ENCODE measurements at regions of chr2 and their contacts with region 1.

Region 1: GRCh38 chr2:9234680-9235387 is 28.2 kb downstream of the ASAP2 start:
- DNase-seq: peak; percentile 90 to 99
- H3K4me3 ChIP-seq: peak overlapping the region; percentile 59
- H3K27ac ChIP-seq: peak overlapping the region; percentile 98
- H3K4me1 ChIP-seq: peaks cover 93% of the 10 kb centered on the region
- H3K27me3 ChIP-seq: no peaks in the 10 kb centered on the region
- CTCF ChIP-seq: no peak

Region 2: GRCh38 chr2:9178904-9179571 is 55.8 kb before region 1 on chr2:
- CTCF ChIA-PET with region 1: no interaction called
- POLR2A ChIA-PET with region 1: no interaction called
- intact Hi-C with region 1: loop called (anchors 1 kb)
- DNase-seq: peak; percentile 54 to 89
- H3K4me3 ChIP-seq: peak overlapping the region; percentile 18; the same call in 1 of the 2 replicates
- H3K27ac ChIP-seq: peak overlapping the region; percentile 90
- H3K4me1 ChIP-seq: peaks cover 69% of the 10 kb centered on the region
- H3K27me3 ChIP-seq: no peaks in the 10 kb centered on the region
- CTCF ChIP-seq: no peak

Region 3: DNA sequence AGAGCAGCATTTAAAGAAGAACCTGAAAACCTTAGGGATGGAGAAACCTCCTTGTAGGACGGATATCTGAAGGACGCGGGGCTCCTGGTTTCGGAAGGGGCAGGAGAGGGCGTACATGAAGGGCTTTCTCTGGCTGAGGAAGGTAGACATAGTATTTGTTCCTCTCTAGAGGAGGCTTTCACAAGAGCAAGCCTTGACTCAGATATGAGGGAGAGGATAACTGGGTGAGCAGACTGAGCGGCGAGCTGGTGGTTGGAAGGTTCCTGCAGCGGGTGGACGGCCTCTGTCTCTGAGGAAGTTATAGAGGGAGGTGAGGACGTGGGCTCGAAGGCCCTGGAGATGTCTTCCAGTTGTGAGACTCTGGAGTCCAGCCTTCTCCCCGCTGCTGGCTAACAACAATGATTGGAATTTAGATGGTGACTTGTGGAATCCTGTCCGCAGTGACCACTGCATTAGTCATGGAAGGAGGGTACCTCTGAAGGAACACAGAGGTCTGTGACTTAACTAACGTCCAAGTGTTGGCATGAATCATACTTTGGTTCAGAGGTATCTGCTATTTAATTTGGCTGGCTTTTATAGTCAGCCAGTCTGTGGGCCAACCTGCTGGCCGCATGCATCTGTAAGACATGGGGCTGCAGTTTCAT is 52.7 kb after region 1 on chr2:
- CTCF ChIA-PET with region 1: no interaction called
- POLR2A ChIA-PET with region 1: interaction called, 10 read pairs
- intact Hi-C with region 1: loop called (anchors 1 kb)
- DNase-seq: peak; percentile 83 to 100
- H3K4me3 ChIP-seq: peak overlapping the region; percentile 33; the same call in 1 of the 2 replicates
- H3K27ac ChIP-seq: peak overlapping the region; percentile 96
- H3K4me1 ChIP-seq: peaks cover 59% of the 10 kb centered on the region
- H3K27me3 ChIP-seq: no peaks in the 10 kb centered on the region
- CTCF ChIP-seq: no peak

Region 4: GRCh38 chr2:9380702-9381628 is 146.1 kb after region 1 on chr2:
- CTCF ChIA-PET with region 1: no interaction called
- POLR2A ChIA-PET with region 1: no interaction called
- intact Hi-C with region 1: loop called (anchors 1 kb)
- DNase-seq: peak; percentile 68 to 94
- H3K4me3 ChIP-seq: peak overlapping the region; percentile 12; the same call in 1 of the 2 replicates
- H3K27ac ChIP-seq: peak overlapping the region; percentile 93
- H3K4me1 ChIP-seq: peaks cover 77% of the 10 kb centered on the region
- H3K27me3 ChIP-seq: no peaks in the 10 kb centered on the region
- CTCF ChIP-seq: no peak

Region 5: DNA sequence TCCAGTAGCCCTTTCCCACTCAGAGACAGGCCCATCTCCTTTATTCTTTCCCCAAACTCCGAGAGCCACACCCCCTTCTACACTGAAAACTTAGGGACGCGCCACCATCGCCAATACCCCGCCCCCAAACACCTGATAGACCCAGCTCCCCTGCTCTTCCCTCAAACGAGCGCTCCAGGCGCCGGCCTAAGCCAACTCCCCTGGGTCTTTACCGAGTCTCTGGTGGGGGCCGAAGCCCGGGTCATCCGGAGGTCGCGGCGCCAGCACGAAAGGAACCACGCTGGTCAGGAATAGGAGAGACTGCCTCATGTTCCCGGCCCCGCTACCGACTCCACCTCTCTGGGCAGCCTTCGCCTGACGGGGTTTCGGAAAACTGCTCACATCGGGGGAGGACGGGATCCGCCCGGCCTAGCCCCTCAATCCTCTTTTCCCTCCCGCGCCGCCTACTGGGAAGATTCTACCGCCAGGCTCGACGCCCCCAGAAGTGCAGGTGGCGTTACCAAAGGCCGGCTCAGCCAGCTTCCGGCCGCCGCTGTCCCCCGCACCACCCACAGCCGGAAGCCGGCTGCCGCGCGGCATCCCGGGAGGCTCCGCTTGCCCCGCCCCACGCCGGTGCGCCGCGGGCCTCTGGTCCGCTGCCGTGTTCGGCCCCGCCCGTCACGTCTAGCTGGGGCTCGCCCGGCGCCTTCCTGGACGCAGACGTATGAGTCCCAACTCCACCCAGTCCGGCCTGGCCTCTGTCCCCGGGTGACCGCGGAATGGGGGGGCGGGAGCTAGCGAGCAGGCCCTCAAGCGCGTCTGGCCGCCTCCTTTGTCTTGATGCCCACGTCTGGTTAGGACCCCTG is 320.7 kb after region 1 on chr2 and contains the start of gene ADAM17:
- CTCF ChIA-PET with region 1: no interaction called
- POLR2A ChIA-PET with region 1: no interaction called
- intact Hi-C with region 1: loop called (anchors 10 kb)
- DNase-seq: peak; percentile 90 to 96
- H3K4me3 ChIP-seq: peak within 1 kb of the TSS; percentile 83
- H3K27ac ChIP-seq: peak within 1 kb of the TSS; percentile 96
- H3K4me1 ChIP-seq: peaks cover 74% of the 10 kb centered on the region
- H3K27me3 ChIP-seq: no peaks in the 10 kb centered on the region
- CTCF ChIP-seq: peak; percentile 35; the same call in 1 of the 2 replicates
- total RNA-seq, gene ADAM17: 53.5 and 65.0 TPM in 2 replicates

Region 6: GRCh38 chr2:9796056-9797010 is 561.5 kb after region 1 on chr2:
- CTCF ChIA-PET with region 1: no interaction called
- POLR2A ChIA-PET with region 1: no interaction called
- intact Hi-C with region 1: no loop called
- DNase-seq: no peak
- H3K4me3 ChIP-seq: no peak overlapping the region
- H3K27ac ChIP-seq: peak overlapping the region; percentile 95
- H3K4me1 ChIP-seq: peaks cover 53% of the 10 kb centered on the region
- H3K27me3 ChIP-seq: no peaks in the 10 kb centered on the region
- CTCF ChIP-seq: no peak

Region 7: DNA sequence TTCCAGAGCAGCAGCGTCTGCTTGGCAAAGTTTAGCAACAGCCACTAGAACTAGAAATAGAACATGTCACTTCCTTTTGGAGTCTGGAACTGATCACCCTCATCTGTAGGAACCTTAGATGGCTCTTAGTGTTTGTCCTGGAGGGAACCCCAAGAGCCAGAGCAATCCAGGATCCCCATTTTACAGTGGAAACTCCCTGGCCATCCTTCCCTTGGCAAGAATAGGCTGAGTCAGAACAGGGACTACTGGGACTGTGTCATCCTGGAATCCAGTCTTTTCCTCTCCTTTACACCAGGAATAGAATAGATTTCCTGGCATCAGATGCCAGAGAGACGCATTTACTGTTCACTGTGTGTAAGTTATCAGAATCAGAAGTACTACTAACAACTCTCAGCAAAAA is 683.4 kb after region 1 on chr2:
- CTCF ChIA-PET with region 1: no interaction called
- POLR2A ChIA-PET with region 1: no interaction called
- intact Hi-C with region 1: no loop called
- DNase-seq: no peak
- H3K4me3 ChIP-seq: no peak overlapping the region
- H3K27ac ChIP-seq: no peak overlapping the region
- H3K4me1 ChIP-seq: peaks cover 9% of the 10 kb centered on the region; the same call in 1 of the 2 replicates
- H3K27me3 ChIP-seq: no peaks in the 10 kb centered on the region
- CTCF ChIP-seq: no peak